ENCODE measurements at regions of chr4 and their contacts with region 1.

Region 1: GRCh38 chr4:98995183-98996055 is at the start of gene METAP1:
- DNase-seq: peak; percentile 94
- H3K4me3 Mint-ChIP-seq: peak within 1 kb of the TSS; percentile 91
- H3K27ac Mint-ChIP-seq: peak within 1 kb of the TSS; percentile 99
- H3K4me1 Mint-ChIP-seq: peaks cover 33% of the 10 kb centered on the region
- H3K27me3 Mint-ChIP-seq: no peaks in the 10 kb centered on the region
- total RNA-seq, gene METAP1: 58.1 and 61.3 TPM in 2 replicates

Region 2: DNA sequence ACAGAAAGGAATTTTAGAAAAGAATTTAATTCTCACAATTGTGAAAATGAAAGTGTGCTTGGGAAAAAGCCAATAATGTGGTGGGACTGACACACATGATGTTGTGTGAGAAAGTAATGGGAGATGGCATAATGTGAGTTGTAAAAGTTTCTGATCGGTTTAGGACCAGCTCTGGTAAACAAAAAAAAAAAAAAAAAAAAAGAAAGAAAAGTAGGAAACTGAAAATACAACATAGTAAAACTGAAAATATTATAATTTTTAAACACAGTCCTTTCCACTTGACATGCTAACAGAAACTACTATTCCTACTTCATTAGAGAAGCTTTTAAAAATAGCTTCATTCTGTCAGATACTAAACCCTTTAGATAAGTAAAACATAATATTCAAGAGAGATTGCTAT is 706.0 kb before region 1 on chr4:
- intact Hi-C with region 1: loop called (anchors 1 kb)
- DNase-seq: no peak
- H3K4me3 Mint-ChIP-seq: no peak overlapping the region
- H3K27ac Mint-ChIP-seq: peak overlapping the region; percentile 67
- H3K4me1 Mint-ChIP-seq: peaks cover 43% of the 10 kb centered on the region
- H3K27me3 Mint-ChIP-seq: no peaks in the 10 kb centered on the region

Region 3: DNA sequence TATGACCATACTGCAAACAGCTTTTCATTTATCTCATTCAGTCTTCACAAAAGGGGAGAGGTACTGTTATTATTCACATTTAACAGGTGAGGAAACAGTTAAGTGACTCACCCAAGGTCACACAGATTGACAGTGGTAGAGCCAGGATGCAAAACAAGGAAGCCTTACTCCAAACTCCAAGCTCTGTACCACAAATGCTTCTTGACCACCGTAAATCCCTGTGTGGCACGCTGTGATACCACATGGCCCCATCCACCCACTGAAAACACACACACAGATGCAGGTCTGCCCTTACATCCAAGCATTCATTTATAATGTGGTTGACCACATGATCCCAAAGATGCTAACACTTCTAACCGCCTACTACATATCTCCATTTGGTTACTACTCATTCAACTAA is 466.5 kb before region 1 on chr4:
- intact Hi-C with region 1: loop called (anchors 2 kb)
- DNase-seq: no peak
- H3K4me3 Mint-ChIP-seq: peak overlapping the region; percentile 9
- H3K27ac Mint-ChIP-seq: peak overlapping the region; percentile 64
- H3K4me1 Mint-ChIP-seq: peaks cover 54% of the 10 kb centered on the region
- H3K27me3 Mint-ChIP-seq: no peaks in the 10 kb centered on the region

Region 4: GRCh38 chr4:98939892-98940298 is 55.5 kb before region 1 on chr4:
- intact Hi-C with region 1: loop called (anchors 2 kb)
- DNase-seq: no peak
- H3K4me3 Mint-ChIP-seq: no peak overlapping the region
- H3K27ac Mint-ChIP-seq: no peak overlapping the region
- H3K4me1 Mint-ChIP-seq: no peaks in the 10 kb centered on the region
- H3K27me3 Mint-ChIP-seq: no peaks in the 10 kb centered on the region

Region 5: DNA sequence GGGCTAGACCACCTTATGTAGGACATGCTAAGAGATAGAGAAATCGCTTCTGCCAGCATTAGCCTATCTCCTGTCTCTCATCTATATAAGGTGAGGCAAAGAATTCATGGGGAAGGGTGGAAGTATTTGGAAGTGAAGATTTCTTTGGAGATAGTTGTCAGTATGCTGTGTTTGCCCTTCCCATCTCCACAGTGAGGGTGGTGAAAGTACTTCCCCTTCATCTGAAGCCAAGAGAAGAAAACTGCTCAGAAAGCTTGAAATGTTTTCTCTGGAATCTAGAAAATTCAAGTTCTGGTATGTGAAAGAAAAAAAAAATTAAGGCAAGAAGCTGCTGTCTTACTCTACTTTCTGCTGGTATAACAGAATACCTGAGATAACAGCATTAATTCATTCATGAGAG is 105.5 kb after region 1 on chr4:
- intact Hi-C with region 1: no loop called
- DNase-seq: no peak
- H3K4me3 Mint-ChIP-seq: no peak overlapping the region
- H3K27ac Mint-ChIP-seq: no peak overlapping the region
- H3K4me1 Mint-ChIP-seq: no peaks in the 10 kb centered on the region
- H3K27me3 Mint-ChIP-seq: no peaks in the 10 kb centered on the region

Region 6: DNA sequence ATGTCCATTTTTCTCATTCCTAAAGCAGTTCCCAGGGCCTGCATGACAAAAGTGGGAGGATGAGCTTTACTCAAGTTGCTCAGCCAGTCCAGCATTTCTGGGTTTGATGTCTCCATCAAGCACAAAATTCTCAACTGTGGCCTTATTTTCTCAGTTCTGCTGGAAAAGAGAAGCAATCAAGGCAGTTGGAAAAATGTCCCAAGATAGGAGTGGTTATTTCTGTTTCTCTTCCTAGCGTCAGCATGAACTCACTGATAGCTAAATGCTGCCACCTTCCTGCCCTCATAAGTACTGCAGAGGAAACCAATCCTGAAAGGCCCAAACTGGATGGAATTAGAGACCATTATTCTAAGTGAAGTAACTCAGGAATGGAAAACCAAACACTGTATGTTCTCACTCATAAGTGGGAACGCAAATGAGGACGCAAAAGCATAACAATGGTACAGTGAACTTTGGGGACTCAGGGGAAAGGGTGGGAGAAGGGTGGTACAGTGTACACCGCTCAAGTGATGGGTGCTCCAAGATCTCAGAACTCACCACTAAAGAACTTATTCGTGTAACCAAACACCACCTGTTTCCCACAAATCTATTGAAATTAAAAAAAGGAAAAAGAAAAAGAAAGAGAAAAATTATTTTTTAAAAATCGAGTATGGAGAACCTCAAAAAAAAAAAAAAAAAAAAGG is 410.2 kb after region 1 on chr4:
- intact Hi-C with region 1: loop called (anchors 1 kb)
- DNase-seq: peak; percentile 25
- H3K4me3 Mint-ChIP-seq: no peak overlapping the region
- H3K27ac Mint-ChIP-seq: no peak overlapping the region
- H3K4me1 Mint-ChIP-seq: peaks cover 19% of the 10 kb centered on the region
- H3K27me3 Mint-ChIP-seq: peaks cover 11% of the 10 kb centered on the region

Region 7: DNA sequence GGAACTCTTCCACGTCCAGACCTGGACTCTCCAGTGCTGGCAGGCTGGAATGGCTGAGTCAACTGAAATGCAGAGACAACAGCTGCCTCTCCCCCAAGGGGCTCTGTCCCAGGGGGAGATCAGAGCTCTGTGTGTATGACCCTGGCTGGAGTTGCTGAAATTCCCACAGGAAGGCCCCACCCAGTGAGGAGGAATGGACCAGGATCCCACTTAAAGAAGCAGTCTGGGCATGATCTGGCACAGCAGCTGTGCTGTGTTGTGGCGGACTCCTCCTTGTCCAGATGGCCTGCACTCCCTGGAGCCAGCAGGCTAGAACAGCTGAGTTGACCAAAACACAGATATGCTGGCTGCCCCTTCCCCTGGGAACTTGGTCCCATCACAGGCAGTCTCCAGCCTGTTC is 540.9 kb after region 1 on chr4:
- intact Hi-C with region 1: no loop called
- DNase-seq: no peak
- H3K4me3 Mint-ChIP-seq: no peak overlapping the region
- H3K27ac Mint-ChIP-seq: no peak overlapping the region
- H3K4me1 Mint-ChIP-seq: no peaks in the 10 kb centered on the region
- H3K27me3 Mint-ChIP-seq: peaks cover 10% of the 10 kb centered on the region

Region 8: DNA sequence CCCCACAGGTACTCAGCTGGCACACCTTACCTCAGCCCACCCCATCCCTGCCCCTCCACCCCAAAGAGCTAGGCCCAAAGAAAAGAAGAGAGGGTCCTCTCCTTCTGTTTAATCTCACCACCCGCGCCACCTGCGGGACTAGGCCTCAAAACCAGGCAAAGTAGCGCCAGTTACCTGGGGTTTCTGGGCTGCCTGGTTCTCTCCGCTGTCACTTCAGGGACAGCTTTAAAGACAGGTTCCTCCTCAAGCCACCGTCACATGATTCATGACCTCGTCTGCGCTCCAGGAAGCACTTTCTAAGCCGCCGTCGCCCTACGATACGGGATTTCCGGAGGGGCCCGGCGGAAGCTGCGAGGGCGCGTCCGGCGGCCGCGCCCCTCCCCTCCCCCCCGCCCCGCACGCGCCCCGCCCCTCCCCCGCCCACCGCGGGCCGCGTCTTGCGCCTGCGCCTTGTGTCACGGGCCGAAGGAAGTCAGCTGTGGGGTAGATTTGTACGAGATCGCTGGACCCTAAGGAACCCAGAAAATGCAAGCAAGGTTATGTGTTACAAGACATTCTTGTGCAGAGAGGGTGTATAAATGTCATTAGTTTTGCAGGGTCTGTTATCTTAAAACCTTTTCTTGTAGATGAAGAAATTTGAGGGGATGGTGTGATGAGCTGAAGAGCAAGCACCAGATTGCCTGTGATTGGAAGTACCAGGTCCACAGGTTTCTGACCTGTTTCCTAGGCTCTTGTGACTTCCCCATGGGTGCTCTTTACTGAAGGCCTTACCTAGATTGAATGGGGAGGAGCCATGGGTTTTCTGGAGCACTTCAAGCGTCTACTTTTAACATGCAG is 899.0 kb after region 1 on chr4 and contains the start of gene LAMTOR3:
- intact Hi-C with region 1: loop called (anchors 1 kb)
- DNase-seq: peak; percentile 87
- H3K4me3 Mint-ChIP-seq: peak within 1 kb of the TSS; percentile 97
- H3K27ac Mint-ChIP-seq: peak within 1 kb of the TSS; percentile 95
- H3K4me1 Mint-ChIP-seq: peaks cover 42% of the 10 kb centered on the region
- H3K27me3 Mint-ChIP-seq: no peaks in the 10 kb centered on the region
- total RNA-seq, gene LAMTOR3: 28.6 and 29.7 TPM in 2 replicates

Measured in activated T-helper 1 cell treated with anti-CD3 and anti-CD28 coated beads, Interleukin-12 subunit alpha, Interleukin-12 subunit beta, Interleukin-2, Interleukin-4 antibody, amounts not matched to agents 30 ng/mL and 10 ng/mL and 1 ng/mL, durations not matched to agents 14 hours and 24 hours and 36 hours (primary cell).